HEK293 (cell line): ENCODE measurements at regions of chr6 and their contacts with region 1.

Region 1: GRCh38 chr6:166106076-166106686 is 61.5 kb downstream of the TBXT start:
- H3K4me3 ChIP-seq: no peak overlapping the region
- H3K27ac ChIP-seq: no peak overlapping the region
- H3K4me1 ChIP-seq: no peaks in the 10 kb centered on the region
- CTCF ChIP-seq: peak; percentile 89

Region 2: DNA sequence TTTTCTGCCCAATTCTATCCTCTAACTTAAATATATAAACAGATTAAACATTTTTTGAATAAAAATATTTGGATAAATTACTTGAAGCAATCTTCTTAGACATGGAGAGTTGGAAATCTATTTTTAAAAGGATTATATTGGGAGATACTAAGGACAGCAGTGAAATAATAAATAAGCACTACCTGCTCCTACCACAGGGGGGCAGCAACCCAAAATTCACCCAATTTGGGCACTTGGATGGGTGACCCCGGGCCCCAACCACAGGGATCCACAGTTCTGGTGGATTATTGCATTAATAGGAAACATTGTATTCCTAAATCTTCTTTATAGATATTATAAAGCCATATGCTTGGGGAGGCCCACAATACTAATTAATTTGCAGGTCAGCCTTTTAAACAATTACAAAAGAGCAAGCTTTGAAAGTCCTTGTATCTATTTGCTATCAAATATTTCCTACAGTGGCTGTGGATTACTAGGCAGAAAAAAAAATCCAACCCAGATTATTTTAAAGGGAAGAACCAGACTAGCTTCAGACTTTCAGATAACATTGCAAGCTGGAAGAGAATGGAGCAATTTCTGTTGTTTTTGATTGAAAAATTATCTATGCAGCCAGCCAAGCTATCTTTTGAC is 376.8 kb before region 1 on chr6:
- CTCF ChIA-PET with region 1: interaction called, 21 read pairs
- POLR2A ChIA-PET with region 1: no interaction called
- H3K4me3 ChIP-seq: no peak overlapping the region
- H3K27ac ChIP-seq: no peak overlapping the region
- H3K4me1 ChIP-seq: no peaks in the 10 kb centered on the region
- CTCF ChIP-seq: 0 out of 2 replicates have a peak, but pooled peaks have one; percentile 26

Region 3: DNA sequence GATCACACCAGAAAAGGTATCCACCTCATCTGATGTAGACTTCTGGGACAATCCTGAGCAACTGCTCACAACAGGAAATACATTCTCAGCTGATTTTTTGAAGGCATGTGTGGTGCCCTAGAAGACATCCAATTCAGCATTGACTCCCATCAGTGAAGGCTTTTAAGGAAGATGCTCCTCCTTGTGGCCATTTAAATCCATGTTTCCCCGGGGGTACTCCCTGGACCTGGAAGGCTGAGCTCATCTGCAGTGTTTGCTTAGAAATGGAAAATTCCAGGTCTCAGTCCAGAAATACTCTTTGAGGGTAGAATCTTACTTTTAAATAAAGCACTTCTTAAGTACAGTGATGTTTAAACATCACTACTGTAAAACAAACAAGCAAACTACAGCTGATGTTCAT is 247.6 kb before region 1 on chr6:
- CTCF ChIA-PET with region 1: interaction called, 15 read pairs
- POLR2A ChIA-PET with region 1: no interaction called
- H3K4me3 ChIP-seq: no peak overlapping the region
- H3K27ac ChIP-seq: no peak overlapping the region
- H3K4me1 ChIP-seq: no peaks in the 10 kb centered on the region
- CTCF ChIP-seq: 0 out of 2 replicates have a peak, but pooled peaks have one; percentile 33

Region 4: GRCh38 chr6:165876588-165876987 is 229.6 kb before region 1 on chr6:
- CTCF ChIA-PET with region 1: interaction called, 267 read pairs
- POLR2A ChIA-PET with region 1: no interaction called
- H3K4me3 ChIP-seq: no peak overlapping the region
- H3K27ac ChIP-seq: no peak overlapping the region
- H3K4me1 ChIP-seq: no peaks in the 10 kb centered on the region
- CTCF ChIP-seq: no peak

Region 5: GRCh38 chr6:165884813-165885765 is 221.1 kb before region 1 on chr6:
- CTCF ChIA-PET with region 1: interaction called, 267 read pairs
- POLR2A ChIA-PET with region 1: no interaction called
- H3K4me3 ChIP-seq: no peak overlapping the region
- H3K27ac ChIP-seq: no peak overlapping the region
- H3K4me1 ChIP-seq: no peaks in the 10 kb centered on the region
- CTCF ChIP-seq: peak; percentile 86